ENCODE measurements at regions of chr2 and their contacts with region 1.

Region 1: GRCh38 chr2:10434886-10435819 is 13.0 kb downstream of the ODC1 start:
- DNase-seq: peak; percentile 88
- ATAC-seq: peak; percentile 88
- H3K4me3 ChIP-seq: no peak overlapping the region
- H3K27ac ChIP-seq: no peak overlapping the region
- H3K4me1 ChIP-seq: no peaks in the 10 kb centered on the region
- H3K27me3 ChIP-seq: no peaks in the 10 kb centered on the region
- CTCF ChIP-seq: peak; percentile 97

Region 2: GRCh38 chr2:10064932-10065772 is 370.0 kb before region 1 on chr2:
- intact Hi-C with region 1: loop called (anchors 5 kb)
- DNase-seq: no peak
- ATAC-seq: peak; percentile 61
- H3K4me3 ChIP-seq: no peak overlapping the region
- H3K27ac ChIP-seq: no peak overlapping the region
- H3K4me1 ChIP-seq: no peaks in the 10 kb centered on the region
- H3K27me3 ChIP-seq: no peaks in the 10 kb centered on the region
- CTCF ChIP-seq: no peak

Region 3: GRCh38 chr2:10122386-10123280 is 312.5 kb before region 1 on chr2 and contains the start of gene RRM2:
- intact Hi-C with region 1: loop called (anchors 5 kb)
- DNase-seq: peak; percentile 94
- ATAC-seq: peak; percentile 87
- H3K4me3 ChIP-seq: peak within 1 kb of the TSS; percentile 51
- H3K27ac ChIP-seq: no peak within 1 kb of the TSS
- H3K4me1 ChIP-seq: peaks cover 33% of the 10 kb centered on the region
- H3K27me3 ChIP-seq: peaks cover 11% of the 10 kb centered on the region
- CTCF ChIP-seq: no peak
- total RNA-seq, gene RRM2: 2.3 TPM